Caco-2 (cell line): ENCODE measurements at regions of chr1 and their contacts with region 1.

Region 1: DNA sequence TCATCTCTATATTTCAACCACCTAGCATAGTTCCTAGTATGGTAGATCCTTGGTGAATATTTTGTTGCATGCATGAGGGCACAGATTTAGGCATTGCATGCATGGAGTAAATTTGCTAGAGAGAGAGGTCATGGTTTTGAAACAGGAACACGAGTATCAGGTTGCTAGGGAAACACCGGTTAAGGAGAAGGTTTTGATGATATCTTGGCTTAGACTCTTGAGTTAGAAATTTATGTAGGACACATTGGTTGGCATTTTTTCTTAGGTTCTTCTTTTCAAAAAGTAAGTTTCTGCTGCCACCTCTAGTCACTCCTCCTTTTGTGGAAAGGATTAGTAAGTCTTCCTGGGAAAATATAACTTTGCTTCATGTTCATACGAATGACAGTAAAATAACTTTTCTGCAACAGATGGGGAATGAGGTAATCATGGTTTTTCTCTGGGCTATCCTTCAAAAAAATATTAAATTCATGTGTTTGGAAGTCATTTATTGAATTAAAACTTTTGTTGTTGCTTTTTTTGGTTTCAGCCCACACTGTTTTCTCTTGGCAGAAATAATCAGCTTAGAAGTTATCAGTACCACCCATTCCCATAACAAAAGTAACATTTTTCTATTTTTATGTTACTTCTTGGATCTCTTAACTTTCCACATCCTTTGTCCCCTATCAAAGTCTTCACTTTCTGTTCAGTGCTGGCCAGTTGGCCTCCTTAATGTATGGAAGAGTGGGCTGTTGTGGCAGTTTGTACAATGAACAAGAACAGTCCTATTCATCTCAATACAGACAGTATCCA is 97.3 kb downstream of the PLA2G4A start:
- DNase-seq: no peak
- H3K4me3 ChIP-seq: no peak overlapping the region
- H3K4me3 Mint-ChIP-seq: no peak overlapping the region
- H3K27ac Mint-ChIP-seq: no peak overlapping the region
- H3K4me1 ChIP-seq: peaks cover 23% of the 10 kb centered on the region
- H3K4me1 Mint-ChIP-seq: peaks cover 11% of the 10 kb centered on the region
- H3K27me3 ChIP-seq: no peaks in the 10 kb centered on the region
- H3K27me3 Mint-ChIP-seq: no peaks in the 10 kb centered on the region
- CTCF ChIP-seq: no peak

Region 2: DNA sequence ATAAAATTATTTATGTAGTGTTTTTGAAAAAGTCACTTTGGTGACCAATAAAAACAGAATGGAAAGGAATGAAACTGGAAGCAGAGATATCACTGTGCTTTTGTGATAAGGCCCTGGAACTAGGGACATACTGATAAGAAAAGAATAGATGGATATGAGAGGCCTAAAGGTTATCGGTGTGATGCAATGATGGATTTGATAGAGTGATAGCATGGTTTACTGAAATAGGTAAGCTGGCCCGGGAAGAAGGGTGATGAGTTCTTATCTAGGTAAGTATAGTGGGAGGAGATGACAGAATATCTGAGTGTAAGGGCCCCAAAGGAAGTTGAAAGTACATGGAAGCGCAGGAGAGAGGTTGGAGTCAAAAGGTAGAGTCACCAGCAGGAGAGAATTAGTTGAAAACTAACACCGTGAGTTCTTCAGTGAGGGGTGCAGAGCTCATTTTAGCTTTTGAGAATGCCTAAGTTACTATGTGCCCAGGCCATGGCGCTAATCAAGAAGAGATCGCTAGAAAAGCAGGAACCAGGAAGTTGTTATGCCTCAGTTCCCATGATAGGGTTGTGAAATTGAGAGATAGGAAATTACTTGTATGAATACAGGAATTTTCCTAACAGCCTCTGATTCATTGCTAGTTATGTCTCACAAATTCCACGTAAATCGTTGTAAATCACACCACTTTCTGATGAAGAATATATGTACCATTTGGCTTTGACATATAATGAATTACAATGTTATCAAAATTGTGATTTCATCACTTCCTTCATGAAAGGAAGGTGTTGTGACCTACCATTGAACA is 18.0 kb after region 1 on chr1:
- CTCF ChIA-PET with region 1: no interaction called
- POLR2A ChIA-PET with region 1: no interaction called
- intact Hi-C with region 1: loop called (anchors 1 kb)
- DNase-seq: peak; percentile 48 to 65
- H3K4me3 ChIP-seq: no peak overlapping the region
- H3K4me3 Mint-ChIP-seq: no peak overlapping the region
- H3K27ac Mint-ChIP-seq: no peak overlapping the region
- H3K4me1 ChIP-seq: peaks cover 11% of the 10 kb centered on the region
- H3K4me1 Mint-ChIP-seq: peaks cover 10% of the 10 kb centered on the region
- H3K27me3 ChIP-seq: no peaks in the 10 kb centered on the region
- H3K27me3 Mint-ChIP-seq: peaks cover 12% of the 10 kb centered on the region
- CTCF ChIP-seq: no peak

Region 3: GRCh38 chr1:186967656-186968394 is 41.8 kb after region 1 on chr1:
- CTCF ChIA-PET with region 1: no interaction called
- POLR2A ChIA-PET with region 1: no interaction called
- intact Hi-C with region 1: loop called (anchors 5 kb)
- DNase-seq: no peak
- H3K4me3 ChIP-seq: no peak overlapping the region
- H3K4me3 Mint-ChIP-seq: no peak overlapping the region
- H3K27ac Mint-ChIP-seq: no peak overlapping the region
- H3K4me1 ChIP-seq: peaks cover 10% of the 10 kb centered on the region; the same call in 1 of the 2 replicates
- H3K4me1 Mint-ChIP-seq: peaks cover 6% of the 10 kb centered on the region
- H3K27me3 ChIP-seq: no peaks in the 10 kb centered on the region
- H3K27me3 Mint-ChIP-seq: no peaks in the 10 kb centered on the region
- CTCF ChIP-seq: no peak